ENCODE measurements at regions of chr7 and their contacts with region 1.

Region 1: DNA sequence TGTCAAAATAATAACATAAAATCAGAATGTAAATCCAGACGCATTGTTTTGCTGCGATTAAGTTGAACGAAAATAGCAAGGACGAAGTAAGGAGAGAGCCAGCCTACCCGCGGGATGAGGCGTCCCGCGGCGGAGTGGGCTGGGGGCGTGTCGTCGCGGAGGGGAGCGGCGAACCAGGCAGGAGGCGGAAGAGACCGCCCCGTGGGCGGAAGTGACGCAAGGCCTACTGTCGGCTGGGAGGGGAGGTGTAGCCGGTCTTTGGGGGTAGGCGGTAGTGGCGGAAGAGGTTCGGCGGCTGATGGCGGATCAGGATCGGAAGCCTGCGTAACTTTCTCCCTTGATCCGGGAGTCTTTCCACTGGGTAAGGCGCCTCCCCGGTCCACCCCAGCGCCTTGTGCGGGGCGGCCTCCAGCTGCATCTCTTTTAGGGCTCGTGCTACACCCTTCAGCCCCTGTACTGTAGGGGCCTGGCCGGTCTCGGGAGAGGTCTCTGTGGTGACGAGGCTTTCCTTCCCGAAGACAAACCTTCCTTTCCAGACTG is at the start of gene TAX1BP1:
- DNase-seq: peak; percentile 92
- H3K4me3 Mint-ChIP-seq: peak within 1 kb of the TSS; percentile 91
- H3K27ac Mint-ChIP-seq: peak within 1 kb of the TSS; percentile 98
- H3K4me1 Mint-ChIP-seq: peaks cover 29% of the 10 kb centered on the region
- H3K27me3 Mint-ChIP-seq: peaks cover 6% of the 10 kb centered on the region
- total RNA-seq, gene TAX1BP1: 90.6 and 97.1 TPM in 2 replicates

Region 2: DNA sequence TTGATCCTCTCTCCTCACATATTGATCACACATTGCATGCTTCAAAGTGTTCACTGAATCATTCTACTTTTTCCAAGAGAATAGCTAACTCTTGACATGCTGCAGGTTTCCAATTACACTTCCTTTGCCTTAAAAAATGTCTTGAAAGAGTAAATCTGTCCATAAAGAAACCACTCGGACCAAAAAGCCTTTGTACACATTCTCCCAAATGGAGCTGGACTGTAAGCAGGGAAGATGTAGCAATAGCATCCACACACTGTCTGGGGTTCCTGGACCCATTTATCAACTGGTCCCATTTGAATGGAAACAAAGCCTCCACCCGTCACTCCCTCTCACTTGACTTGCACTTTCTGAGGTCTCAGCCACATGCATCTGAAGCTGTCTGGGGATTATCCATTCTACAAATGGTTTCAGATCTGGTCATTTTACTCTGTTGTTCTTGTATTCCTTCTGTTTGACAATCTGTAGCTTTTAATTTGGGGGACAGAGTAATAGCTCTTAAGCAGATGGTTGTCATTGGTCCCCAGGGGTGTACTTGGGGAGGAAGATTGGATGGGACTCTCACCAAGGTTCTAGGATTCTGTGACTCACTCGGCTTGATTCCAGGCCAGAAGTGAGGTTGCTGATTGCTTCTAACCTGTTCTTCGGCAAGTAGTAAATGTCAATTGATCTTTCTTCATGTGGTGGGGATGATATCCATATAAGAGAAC is 280.8 kb before region 1 on chr7:
- intact Hi-C with region 1: no loop called
- DNase-seq: no peak
- H3K4me3 Mint-ChIP-seq: no peak overlapping the region
- H3K27ac Mint-ChIP-seq: no peak overlapping the region
- H3K4me1 Mint-ChIP-seq: no peaks in the 10 kb centered on the region
- H3K27me3 Mint-ChIP-seq: no peaks in the 10 kb centered on the region

Region 3: GRCh38 chr7:27697861-27698430 is 42.0 kb before region 1 on chr7:
- intact Hi-C with region 1: no loop called
- DNase-seq: no peak
- H3K4me3 Mint-ChIP-seq: no peak overlapping the region
- H3K27ac Mint-ChIP-seq: no peak overlapping the region
- H3K4me1 Mint-ChIP-seq: peaks cover 4% of the 10 kb centered on the region
- H3K27me3 Mint-ChIP-seq: peaks cover 8% of the 10 kb centered on the region

Region 4: DNA sequence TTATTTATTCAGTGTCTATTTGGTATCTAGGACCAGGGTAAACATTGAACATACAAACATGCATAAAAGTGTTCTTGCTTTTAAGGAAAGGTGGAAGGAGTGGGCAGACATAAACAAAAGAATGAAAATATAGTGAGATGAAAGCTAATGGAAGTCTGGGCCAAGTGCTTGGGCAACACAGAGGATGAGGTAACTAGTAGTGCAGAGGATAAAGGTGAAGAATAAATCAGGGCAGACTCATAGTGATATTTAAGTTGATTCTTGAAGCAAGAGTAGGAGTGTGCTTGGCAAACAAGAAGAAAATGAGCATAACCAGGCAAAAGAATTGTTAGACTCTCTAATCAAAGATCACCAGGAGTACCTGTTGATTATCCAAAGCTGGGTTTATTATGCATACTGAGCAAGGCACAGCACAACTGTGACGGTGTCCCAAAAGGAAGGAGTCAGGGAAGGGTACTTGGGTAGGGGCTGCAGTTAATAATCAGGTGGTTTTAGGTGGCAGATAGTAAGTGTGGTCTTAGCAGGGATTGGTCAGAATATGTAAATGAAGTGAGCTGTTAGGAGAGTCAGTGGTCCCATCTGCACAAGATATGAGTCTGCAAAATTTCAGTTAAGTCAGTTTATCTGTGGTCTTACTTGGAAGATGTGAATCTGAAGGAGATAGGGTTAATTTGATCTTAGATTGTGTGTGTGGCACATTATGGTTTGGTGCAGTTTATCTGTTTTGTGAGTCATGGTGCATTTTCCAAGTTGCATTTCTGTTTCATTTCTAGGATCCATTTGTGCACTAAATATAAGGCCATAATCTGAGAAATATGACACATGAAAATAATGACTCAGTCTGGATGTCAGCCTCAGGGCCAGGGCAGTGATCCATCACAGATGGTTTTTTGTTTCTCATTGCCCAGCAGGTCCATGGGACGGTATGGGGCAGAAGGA is 30.6 kb before region 1 on chr7:
- intact Hi-C with region 1: loop called (anchors 1 kb)
- DNase-seq: no peak
- H3K4me3 Mint-ChIP-seq: no peak overlapping the region
- H3K27ac Mint-ChIP-seq: peak overlapping the region; percentile 55
- H3K4me1 Mint-ChIP-seq: peaks cover 24% of the 10 kb centered on the region
- H3K27me3 Mint-ChIP-seq: peaks cover 11% of the 10 kb centered on the region

Region 5: DNA sequence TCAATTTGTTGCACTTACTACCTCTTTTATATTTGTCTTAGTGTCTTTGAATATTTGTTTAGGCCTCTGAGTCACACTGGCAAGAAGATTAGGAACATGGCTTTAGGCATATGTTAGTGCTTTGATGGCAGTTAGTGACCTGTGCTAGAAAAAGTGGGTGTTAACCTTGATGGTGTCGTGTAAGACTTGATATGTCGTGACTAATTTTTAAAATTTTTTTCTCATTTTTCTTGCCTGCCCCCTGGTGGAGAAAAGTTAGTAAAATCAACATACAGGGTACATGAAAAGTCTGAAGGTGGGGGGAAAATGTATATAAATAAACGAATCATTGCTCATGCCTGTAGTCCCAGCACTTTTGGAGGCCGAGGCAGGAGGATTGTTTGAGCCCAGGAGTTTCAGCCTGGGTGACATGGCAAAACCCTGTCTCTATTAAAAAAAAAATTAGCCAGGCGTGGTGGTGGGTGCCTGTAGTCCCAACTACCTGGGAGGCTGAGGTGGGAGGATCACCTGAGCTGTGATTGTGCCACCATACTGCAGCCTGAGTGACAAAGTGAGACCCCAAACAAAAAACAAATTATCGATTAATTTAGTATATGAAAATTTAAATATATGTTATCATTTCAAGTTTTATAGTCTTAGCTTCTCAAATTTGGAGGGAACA is 44.5 kb after region 1 on chr7:
- intact Hi-C with region 1: loop called (anchors 2 kb)
- DNase-seq: no peak
- H3K4me3 Mint-ChIP-seq: no peak overlapping the region
- H3K27ac Mint-ChIP-seq: no peak overlapping the region
- H3K4me1 Mint-ChIP-seq: peaks cover 18% of the 10 kb centered on the region
- H3K27me3 Mint-ChIP-seq: no peaks in the 10 kb centered on the region

Region 6: GRCh38 chr7:27901028-27901760 is 161.2 kb after region 1 on chr7:
- intact Hi-C with region 1: loop called (anchors 1 kb)
- DNase-seq: peak; percentile 22
- H3K4me3 Mint-ChIP-seq: no peak overlapping the region
- H3K27ac Mint-ChIP-seq: no peak overlapping the region
- H3K4me1 Mint-ChIP-seq: peaks cover 24% of the 10 kb centered on the region
- H3K27me3 Mint-ChIP-seq: peaks cover 21% of the 10 kb centered on the region